ENCODE measurements at regions of chr10 and their contacts with region 1.

Region 1: GRCh38 chr10:6108603-6109443 is 20.0 kb downstream of the RBM17 start:
- DNase-seq: peak; percentile 35
- H3K4me3 ChIP-seq: no peak overlapping the region
- H3K27ac ChIP-seq: no peak overlapping the region
- H3K4me1 ChIP-seq: peaks cover 3% of the 10 kb centered on the region
- H3K27me3 ChIP-seq: no peaks in the 10 kb centered on the region
- CTCF ChIP-seq: peak; percentile 67

Region 2: DNA sequence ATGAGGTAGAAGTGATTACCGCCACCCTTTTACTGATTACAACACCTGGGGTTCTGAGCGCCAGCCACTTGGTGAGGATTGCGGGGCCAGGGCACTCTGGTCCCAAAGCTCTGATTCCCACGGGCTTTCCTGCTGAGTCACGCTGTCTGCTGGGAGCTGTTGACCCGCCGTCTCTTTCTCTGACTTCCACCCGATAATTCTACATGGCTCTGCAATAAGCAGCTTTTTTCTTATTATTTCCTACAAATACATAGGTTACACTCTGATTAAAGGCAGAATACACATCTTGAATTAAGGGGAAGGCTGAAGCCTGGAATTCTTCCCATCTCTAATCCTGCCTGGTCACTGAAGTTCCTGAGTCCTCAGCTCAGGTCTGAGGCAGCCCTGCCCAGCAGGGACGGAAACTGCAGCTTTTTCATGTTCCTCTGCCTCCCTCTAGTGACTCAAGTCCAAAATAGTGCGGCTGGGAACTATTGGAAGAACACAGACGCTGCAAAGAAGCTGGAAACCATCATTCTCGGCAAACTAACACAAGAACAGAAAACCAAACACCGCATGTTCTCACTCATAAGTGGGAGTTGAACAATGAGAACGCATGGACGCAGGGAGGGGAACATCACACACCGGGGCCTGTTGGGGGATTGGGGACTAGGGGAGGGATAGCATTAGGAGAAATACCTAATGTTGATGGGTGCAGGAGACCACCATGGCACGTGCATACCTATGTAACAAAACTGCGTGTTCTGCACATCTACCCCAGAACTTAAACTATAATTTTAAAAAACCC is 292.9 kb after region 1 on chr10:
- intact Hi-C with region 1: loop called (anchors 2 kb)
- DNase-seq: peak; percentile 77
- H3K4me3 ChIP-seq: peak overlapping the region; percentile 20
- H3K27ac ChIP-seq: no peak overlapping the region
- H3K4me1 ChIP-seq: no peaks in the 10 kb centered on the region
- H3K27me3 ChIP-seq: no peaks in the 10 kb centered on the region
- CTCF ChIP-seq: peak; percentile 54